ENCODE measurements at regions of chr1 and their contacts with region 1.

Region 1: GRCh38 chr1:47569681-47570470 is 132.0 kb downstream of the FOXD2 start:
- DNase-seq: peak; percentile 80 to 82
- ATAC-seq: peak; percentile 80
- H3K4me3 ChIP-seq: no peak overlapping the region
- H3K27ac ChIP-seq: no peak overlapping the region
- H3K4me1 ChIP-seq: no peaks in the 10 kb centered on the region
- H3K27me3 ChIP-seq: no peaks in the 10 kb centered on the region

Region 2: DNA sequence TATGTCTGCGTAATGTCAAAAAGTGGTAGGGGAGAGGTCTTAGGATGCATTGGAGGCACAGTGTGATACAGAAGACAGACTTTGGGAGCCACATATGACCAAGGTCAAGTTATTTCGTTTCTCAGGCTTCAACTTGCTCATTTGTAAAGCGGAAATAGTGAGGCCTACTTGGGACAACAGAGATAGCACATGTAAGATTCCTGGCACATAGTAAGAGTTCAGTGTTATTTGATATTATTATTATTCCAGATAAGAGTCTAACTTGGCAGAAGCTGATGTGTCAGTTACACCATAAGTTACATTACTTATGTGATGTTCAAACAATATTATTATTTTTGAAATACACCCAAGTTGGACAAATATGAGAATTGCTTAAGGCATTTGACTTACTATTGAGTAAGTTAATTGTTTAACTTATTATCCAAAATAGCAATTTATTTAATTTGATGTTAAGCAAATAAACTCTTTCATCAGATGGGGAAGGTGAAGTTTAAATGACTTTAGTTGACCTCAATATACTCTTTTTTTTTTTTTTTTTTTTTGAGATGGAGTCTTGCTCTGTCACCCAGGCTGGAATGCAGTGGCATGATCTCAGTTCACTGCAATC is 556.5 kb before region 1 on chr1:
- intact Hi-C with region 1: no loop called
- DNase-seq: no peak
- ATAC-seq: peak; percentile 69
- H3K4me3 ChIP-seq: no peak overlapping the region
- H3K27ac ChIP-seq: peak overlapping the region in 1 of 2 donors; percentile 21
- H3K4me1 ChIP-seq: peaks cover 1 to 6% of the 10 kb centered on the region in 2 donors
- H3K27me3 ChIP-seq: no peaks in the 10 kb centered on the region

Region 3: GRCh38 chr1:47521034-47521881 is 48.6 kb before region 1 on chr1:
- intact Hi-C with region 1: loop called (anchors 5 kb)
- DNase-seq: peak; percentile 82 to 88
- ATAC-seq: peak; percentile 78
- H3K4me3 ChIP-seq: no peak overlapping the region
- H3K27ac ChIP-seq: peak overlapping the region in 1 of 2 donors; percentile 38
- H3K4me1 ChIP-seq: peaks cover 0 to 3% of the 10 kb centered on the region in 2 donors
- H3K27me3 ChIP-seq: no peaks in the 10 kb centered on the region

Region 4: GRCh38 chr1:47644212-47644573 is 74.3 kb after region 1 on chr1:
- intact Hi-C with region 1: no loop called
- DNase-seq: no peak
- ATAC-seq: peak; percentile 73
- H3K4me3 ChIP-seq: no peak overlapping the region
- H3K27ac ChIP-seq: peak overlapping the region; percentile 38 to 70
- H3K4me1 ChIP-seq: no peaks in the 10 kb centered on the region
- H3K27me3 ChIP-seq: no peaks in the 10 kb centered on the region

Region 5: DNA sequence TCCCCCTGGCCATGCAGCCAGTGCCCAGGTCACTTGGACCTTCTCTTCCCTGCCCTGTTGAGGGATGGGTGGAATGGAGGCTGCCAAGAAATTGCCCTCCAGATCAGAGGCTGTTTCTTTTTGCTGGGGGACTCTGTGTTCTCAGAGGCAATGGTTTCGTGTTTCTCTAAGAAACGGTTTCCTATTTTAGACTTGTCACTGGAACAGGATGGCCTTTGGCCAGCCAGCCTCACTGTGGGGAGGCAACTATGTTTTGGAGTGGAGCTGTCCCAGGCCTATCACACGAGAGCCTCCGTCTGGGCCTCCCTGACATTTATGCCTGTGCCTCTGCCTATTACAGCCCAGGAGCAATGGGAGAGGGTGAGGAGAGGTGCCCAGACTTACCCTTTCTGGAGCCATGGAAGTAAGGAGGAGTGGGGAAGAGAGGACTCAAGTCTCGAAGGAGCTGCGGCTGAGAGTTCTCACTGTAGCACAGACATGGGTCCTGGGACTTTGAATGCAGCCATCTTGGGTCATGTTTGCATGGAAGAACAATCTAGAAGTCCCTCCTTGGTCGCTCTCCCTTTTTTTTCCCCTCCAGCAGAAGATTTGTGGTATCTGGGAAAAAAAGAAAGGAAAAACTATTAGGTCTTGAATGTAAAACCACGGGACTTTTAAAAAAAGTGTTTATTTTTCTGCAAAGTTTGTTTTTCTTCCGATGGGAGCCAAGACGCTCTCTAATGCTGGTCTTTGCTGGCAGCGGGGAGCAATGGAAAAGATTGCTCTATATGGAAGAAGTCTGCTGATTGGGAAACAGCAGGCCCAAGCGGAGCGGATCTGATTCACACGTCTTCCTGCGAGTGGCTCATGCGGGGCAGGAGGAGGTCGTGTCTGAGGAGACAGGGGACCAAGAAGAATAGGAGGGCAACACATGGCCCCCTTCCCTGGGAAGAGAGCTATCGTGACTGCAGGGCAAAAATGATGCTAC is 87.1 kb after region 1 on chr1:
- intact Hi-C with region 1: loop called in 1 of 2 experiments (anchors 5 kb)
- DNase-seq: peak; percentile 92 to 93
- ATAC-seq: peak; percentile 91
- H3K4me3 ChIP-seq: no peak overlapping the region
- H3K27ac ChIP-seq: peak overlapping the region; percentile 99 to 100
- H3K4me1 ChIP-seq: peaks cover 2 to 10% of the 10 kb centered on the region in 2 donors
- H3K27me3 ChIP-seq: no peaks in the 10 kb centered on the region

Region 6: DNA sequence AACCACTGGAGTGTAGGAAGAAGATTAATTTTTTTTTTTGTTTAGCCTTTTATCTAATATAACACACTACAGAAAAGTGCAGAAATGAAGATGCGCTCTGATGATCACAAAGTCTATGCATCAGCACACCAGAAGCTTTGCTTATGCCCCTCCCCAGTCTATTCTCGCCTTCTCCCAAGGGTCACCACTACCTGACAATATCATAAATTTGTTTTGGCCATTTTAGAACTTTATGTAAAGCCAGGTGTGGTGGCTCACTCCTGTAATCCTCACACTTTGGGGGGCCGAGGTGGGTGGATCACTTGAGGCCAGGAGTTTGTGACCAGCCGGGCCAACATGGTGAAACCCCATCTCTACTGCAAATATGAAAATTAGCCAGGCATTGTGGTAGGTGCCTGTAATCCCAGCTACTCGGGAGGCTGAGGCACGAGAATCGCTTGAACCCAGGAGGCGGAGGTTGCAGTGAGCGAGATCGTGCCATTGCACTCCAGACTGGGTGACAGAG is 99.3 kb after region 1 on chr1:
- intact Hi-C with region 1: no loop called
- DNase-seq: no peak
- ATAC-seq: no peak
- H3K4me3 ChIP-seq: no peak overlapping the region
- H3K27ac ChIP-seq: no peak overlapping the region
- H3K4me1 ChIP-seq: no peaks in the 10 kb centered on the region
- H3K27me3 ChIP-seq: no peaks in the 10 kb centered on the region

Region 7: DNA sequence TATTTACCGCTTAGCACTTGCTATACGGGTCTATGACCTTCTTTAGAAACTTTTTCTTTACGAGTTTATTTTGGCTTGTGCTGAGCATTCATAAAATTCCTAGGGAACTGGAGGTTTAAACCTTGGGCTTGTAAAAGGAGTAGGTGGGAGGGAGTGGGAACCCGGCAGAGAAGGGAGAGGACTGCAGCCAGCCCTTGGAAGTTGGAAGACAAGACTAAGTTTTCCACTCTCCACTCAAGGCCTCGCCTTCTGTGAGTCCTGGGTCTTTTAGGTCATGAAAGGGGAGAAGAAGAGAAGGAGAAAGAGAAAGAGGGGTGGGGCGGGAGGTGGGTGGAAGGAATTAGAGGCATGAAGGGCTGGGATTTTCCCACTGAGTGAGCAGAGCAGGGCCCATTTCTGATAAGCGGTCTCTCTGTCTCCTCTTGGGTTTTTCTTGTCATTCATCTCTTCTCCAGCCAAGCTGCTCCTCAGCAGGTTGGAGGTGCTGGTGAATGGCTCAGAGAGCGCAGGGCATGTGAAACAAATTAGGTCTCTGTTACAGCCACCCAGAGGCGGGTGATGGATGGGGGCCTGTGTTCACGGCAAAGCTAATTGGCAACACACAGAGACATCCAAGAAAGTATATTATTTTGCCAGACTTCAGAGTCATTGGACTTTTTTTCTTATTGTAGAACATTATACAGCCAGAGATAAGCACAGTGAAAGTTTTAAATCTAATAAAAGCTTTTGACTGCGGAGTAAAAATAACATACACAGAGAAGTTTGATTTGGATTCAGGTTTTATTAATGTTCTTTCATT is 115.3 kb after region 1 on chr1:
- intact Hi-C with region 1: loop called in 1 of 2 experiments (anchors 5 kb)
- DNase-seq: peak in 1 of 2 donors; percentile 63
- ATAC-seq: peak; percentile 55
- H3K4me3 ChIP-seq: no peak overlapping the region
- H3K27ac ChIP-seq: peak overlapping the region; percentile 80 to 94
- H3K4me1 ChIP-seq: peaks cover 0 to 3% of the 10 kb centered on the region in 2 donors
- H3K27me3 ChIP-seq: no peaks in the 10 kb centered on the region